ENCODE measurements at regions of chr11 and their contacts with region 1.

Region 1: DNA sequence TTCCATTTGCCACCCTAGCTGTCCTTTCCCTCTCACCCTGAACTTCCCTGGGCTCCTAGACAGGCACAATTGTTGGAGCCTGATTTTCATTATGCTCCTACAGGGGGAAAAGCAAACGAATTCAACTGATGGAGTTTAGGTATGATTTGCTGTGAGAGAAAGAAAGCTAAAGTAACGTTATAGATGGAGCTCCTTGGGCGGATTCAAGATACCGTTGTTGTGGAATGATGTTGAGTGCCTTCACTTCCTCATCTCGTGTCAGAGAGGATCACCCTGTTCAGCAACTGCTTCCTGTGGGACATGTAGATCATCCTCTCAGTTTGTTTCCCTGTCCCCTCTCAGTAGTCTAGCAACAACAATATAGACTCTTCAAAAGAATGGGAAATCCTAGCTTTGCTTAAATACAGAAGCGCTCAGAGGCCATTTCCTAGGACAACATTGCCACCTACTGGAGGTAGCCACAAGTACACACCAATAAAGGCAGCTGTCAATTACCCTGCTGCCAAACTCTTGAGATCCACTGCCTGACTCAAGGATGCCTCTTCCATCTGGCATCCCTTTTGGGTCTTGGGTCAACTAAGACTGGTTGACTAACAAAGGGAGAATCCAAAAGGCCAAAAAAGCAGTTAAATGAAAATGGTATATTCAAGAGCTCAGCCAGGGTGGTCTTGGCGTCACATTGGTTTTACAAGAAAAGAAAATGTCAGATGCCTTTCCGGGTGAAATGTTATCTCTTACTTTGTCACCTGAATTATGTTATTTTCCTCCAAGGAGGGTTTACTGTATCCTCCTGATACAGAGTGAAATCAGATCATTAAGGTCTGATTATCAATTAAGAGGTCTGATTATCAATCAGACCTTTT is 13.5 kb upstream of the DTX4 start:
- DNase-seq: peak; percentile 73
- H3K27ac ChIP-seq: no peak overlapping the region
- CTCF ChIP-seq: peak; percentile 78

Region 2: GRCh38 chr11:59088162-59088561 is 70.3 kb before region 1 on chr11:
- CTCF ChIA-PET with region 1: no interaction called
- POLR2A ChIA-PET with region 1: no interaction called
- DNase-seq: no peak
- H3K27ac ChIP-seq: no peak overlapping the region
- CTCF ChIP-seq: no peak

Region 3: GRCh38 chr11:59135648-59136461 is 22.6 kb before region 1 on chr11:
- CTCF ChIA-PET with region 1: interaction called, 12 read pairs
- POLR2A ChIA-PET with region 1: no interaction called
- DNase-seq: peak; percentile 77
- H3K27ac ChIP-seq: no peak overlapping the region
- CTCF ChIP-seq: peak; percentile 98